ENCODE measurements at regions of chr19 and their contacts with region 1.

Region 1: GRCh38 chr19:41310033-41310758 is at the start of gene CCDC97:
- DNase-seq: peak; percentile 86
- H3K4me3 Mint-ChIP-seq: peak within 1 kb of the TSS; percentile 87
- H3K27ac Mint-ChIP-seq: peak within 1 kb of the TSS; percentile 96
- H3K4me1 Mint-ChIP-seq: peaks cover 29% of the 10 kb centered on the region
- H3K27me3 Mint-ChIP-seq: no peaks in the 10 kb centered on the region
- CTCF ChIP-seq: no peak
- total RNA-seq, gene CCDC97: 25.0 and 28.5 TPM in 2 replicates

Region 2: DNA sequence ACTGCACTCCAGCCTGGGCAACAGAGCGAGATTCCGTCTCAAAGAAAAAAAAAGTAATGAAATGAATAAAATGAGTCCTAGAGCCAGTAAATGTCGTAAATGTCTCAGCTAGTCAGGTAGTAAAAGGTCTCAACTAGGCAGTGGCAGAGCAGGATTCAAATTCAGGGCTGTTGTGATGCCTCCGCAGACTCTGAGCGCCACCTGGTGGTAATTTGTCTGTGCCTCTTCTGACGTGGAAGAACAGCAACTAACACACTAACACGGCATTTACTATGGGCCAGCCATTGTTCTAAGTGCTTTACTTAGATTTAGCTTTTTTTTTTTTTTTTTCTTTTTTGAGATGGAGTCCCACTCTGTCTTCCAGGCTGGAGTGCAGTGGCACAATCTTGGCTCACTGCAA is 165.8 kb before region 1 on chr19:
- CTCF ChIA-PET with region 1: no interaction called
- POLR2A ChIA-PET with region 1: interaction called, 3 read pairs
- intact Hi-C with region 1: loop called (anchors 5 kb)
- DNase-seq: peak; percentile 84
- H3K4me3 Mint-ChIP-seq: no peak overlapping the region
- H3K27ac Mint-ChIP-seq: no peak overlapping the region
- H3K4me1 Mint-ChIP-seq: no peaks in the 10 kb centered on the region
- H3K27me3 Mint-ChIP-seq: peaks cover 36% of the 10 kb centered on the region
- CTCF ChIP-seq: peak; percentile 79

Region 3: DNA sequence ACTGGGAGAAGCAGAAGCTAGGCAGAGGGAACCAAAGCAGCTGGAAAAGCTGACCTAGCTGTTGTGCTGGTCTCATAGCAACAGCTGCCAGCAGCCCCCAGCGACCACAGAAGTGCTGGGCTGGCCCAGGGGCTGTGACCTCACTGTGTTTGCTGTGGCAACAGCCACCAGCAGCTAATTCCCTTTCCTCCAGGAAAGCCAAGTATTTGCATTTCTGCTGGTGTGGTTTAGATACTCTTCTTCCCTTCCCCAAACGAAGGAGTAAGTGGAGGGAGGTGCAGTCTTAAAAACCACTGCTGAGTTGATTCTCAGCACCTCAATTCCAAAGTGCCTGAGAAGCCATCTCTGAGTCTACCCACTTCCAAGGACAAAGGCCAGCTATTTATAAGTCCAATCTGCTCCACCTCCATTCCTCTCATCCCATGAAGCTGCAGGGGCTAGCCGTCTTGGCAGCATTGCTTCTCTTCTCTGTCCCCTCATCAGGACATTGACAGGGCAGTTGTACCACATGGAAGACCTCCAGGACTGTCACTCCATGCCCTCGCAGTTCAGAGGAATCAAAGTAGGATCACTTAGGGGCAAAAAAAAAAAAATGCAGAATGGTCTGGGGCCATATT is 11.7 kb before region 1 on chr19:
- CTCF ChIA-PET with region 1: interaction called, 25 read pairs
- POLR2A ChIA-PET with region 1: interaction called, 5 read pairs
- intact Hi-C with region 1: no loop called
- DNase-seq: no peak
- H3K4me3 Mint-ChIP-seq: no peak overlapping the region
- H3K27ac Mint-ChIP-seq: no peak overlapping the region
- H3K4me1 Mint-ChIP-seq: no peaks in the 10 kb centered on the region
- H3K27me3 Mint-ChIP-seq: no peaks in the 10 kb centered on the region
- CTCF ChIP-seq: no peak

Region 4: GRCh38 chr19:41327576-41328156 is 17.5 kb after region 1 on chr19:
- CTCF ChIA-PET with region 1: interaction called, 14 read pairs
- POLR2A ChIA-PET with region 1: interaction called, 12 read pairs
- intact Hi-C with region 1: no loop called
- DNase-seq: peak; percentile 92
- H3K4me3 Mint-ChIP-seq: peak overlapping the region; percentile 71
- H3K27ac Mint-ChIP-seq: peak overlapping the region; percentile 41
- H3K4me1 Mint-ChIP-seq: peaks cover 54% of the 10 kb centered on the region
- H3K27me3 Mint-ChIP-seq: no peaks in the 10 kb centered on the region
- CTCF ChIP-seq: no peak

Region 5: DNA sequence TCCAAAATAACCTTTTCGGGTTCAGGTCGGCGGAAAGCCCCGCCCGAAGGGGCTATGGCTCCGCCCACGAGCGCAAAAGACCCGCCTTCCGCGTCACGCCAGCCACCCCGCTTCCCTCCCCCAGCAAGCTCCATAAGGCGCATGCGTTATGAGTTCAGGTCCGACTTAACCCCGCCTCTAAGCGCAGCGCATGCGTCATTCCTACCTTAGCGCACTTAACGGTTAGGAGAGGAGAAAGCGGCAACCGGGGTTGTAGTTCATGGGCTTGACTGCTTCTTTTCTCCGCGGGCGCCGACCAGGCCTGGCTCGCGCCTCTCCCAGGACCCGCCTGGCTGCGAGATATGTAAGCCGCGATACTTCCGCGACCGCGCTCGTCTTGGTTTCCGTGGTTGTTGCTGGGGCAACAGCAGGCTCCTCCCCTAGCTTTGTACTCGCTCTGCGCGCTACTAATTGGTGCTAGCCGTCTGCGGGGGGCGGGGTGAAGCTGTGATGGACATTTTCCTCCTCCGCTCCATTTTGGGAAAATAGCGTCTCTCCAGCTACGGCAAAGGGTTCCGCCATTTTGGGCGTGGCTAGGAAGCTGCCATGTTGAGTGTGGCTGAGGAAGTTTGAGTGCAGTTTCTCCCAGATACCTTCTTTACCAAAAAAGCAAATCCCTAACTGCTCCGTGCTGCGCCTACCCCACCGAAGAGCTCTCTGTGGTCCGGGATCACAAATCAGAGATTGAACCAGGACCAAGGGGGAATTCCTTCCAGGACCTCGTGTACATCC is 53.7 kb after region 1 on chr19 and contains the start of gene B9D2:
- CTCF ChIA-PET with region 1: interaction called, 8 read pairs
- POLR2A ChIA-PET with region 1: interaction called, 15 read pairs
- intact Hi-C with region 1: no loop called
- DNase-seq: peak; percentile 99
- H3K4me3 Mint-ChIP-seq: peak within 1 kb of the TSS; percentile 98
- H3K27ac Mint-ChIP-seq: peak within 1 kb of the TSS; percentile 100
- H3K4me1 Mint-ChIP-seq: peaks cover 21% of the 10 kb centered on the region
- H3K27me3 Mint-ChIP-seq: no peaks in the 10 kb centered on the region
- CTCF ChIP-seq: no peak
- total RNA-seq, gene B9D2: 5.5 and 5.7 TPM in 2 replicates